ENCODE measurements at regions of chr7 and their contacts with region 1.

Region 1: GRCh38 chr7:6729492-6730342 is 23.0 kb upstream of the ZNF12 start:
- DNase-seq: peak; percentile 95
- H3K4me3 Mint-ChIP-seq: peak overlapping the region; percentile 90
- H3K27ac Mint-ChIP-seq: peak overlapping the region; percentile 91
- H3K4me1 Mint-ChIP-seq: peaks cover 17% of the 10 kb centered on the region
- H3K27me3 Mint-ChIP-seq: peaks cover 2% of the 10 kb centered on the region

Region 2: DNA sequence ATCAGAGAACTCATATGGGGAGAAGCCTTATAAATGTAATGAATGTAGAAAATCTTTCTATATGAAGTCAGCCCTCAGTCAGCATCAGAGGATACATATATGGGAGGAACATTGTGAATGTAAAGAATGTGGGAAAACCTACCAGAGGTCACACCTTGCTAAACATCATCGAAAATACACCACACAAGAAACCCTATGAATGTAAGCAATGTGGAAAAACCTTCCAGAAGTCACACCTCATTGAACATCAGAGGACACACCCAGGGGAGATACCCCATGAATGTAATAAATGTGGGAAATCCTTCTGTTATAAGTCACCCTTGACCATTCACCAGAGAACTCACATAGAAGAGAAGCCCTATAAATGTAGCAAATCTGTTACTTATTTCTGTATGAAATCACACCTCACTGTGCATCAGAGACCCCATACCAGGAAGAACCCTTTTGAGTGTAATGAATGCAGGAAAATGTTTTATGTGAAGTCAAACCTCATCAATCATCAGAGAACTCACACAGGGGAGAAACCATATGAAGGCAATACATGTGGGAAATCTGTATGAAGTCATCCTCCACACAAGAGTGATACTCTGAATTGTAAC is 53.8 kb before region 1 on chr7:
- intact Hi-C with region 1: no loop called
- DNase-seq: no peak
- H3K4me3 Mint-ChIP-seq: no peak overlapping the region
- H3K27ac Mint-ChIP-seq: no peak overlapping the region
- H3K4me1 Mint-ChIP-seq: no peaks in the 10 kb centered on the region
- H3K27me3 Mint-ChIP-seq: no peaks in the 10 kb centered on the region

Region 3: DNA sequence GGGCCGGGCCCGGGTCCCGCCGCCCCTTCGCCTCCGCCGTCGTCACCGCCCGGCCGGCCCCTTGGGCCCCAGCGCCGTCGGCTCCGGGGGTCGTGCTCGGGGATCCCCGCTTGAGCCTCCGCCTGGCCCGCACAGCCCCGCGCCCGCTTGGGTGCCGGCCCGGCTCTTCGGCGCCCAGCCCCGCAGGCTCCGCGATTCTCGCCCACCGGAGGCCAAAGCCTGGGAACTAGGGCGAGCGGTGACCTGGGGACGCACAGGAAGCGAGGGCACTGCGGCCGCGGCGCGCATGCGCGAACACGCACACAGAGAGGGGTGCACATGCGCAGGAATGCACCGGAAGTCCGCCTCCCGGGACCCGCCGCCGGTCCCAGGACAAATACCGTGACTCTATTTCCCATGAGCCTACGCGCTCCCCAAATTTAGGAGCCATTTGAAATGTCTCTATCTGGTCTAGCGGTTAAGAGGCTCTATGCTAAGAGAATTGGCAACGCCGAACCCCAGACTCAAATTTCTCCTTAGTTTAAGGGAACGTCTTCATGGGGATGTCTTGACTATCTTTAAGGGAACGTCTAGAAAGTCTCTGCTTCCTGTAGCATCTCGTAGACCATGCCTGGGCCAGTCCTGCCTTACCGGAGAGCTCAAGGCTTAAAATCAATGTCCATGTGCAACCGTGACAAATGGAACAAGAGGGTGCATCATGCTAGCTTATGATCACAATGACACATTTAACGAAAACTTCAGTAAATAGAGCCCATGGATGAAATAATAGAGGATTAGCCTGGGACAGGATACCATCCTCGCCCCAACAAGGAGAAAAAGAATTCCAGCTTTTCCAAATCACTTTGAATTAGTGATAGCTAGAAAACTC is 22.8 kb before region 1 on chr7 and contains the start of gene ZNF12:
- intact Hi-C with region 1: loop called (anchors 1 kb)
- DNase-seq: peak; percentile 98
- H3K4me3 Mint-ChIP-seq: peak within 1 kb of the TSS; percentile 96
- H3K27ac Mint-ChIP-seq: peak within 1 kb of the TSS; percentile 91
- H3K4me1 Mint-ChIP-seq: peaks cover 31% of the 10 kb centered on the region
- H3K27me3 Mint-ChIP-seq: no peaks in the 10 kb centered on the region
- total RNA-seq, gene ZNF12: 17.9 and 22.8 TPM in 2 replicates

Measured in activated CD4-positive, alpha-beta T cell treated with anti-CD3 and anti-CD28 coated beads, Interleukin-2, amount 10 ng/mL, durations not matched to agents 24 days and 14 days (primary cell).